ENCODE measurements at regions of chr3 and their contacts with region 1.

Region 1: DNA sequence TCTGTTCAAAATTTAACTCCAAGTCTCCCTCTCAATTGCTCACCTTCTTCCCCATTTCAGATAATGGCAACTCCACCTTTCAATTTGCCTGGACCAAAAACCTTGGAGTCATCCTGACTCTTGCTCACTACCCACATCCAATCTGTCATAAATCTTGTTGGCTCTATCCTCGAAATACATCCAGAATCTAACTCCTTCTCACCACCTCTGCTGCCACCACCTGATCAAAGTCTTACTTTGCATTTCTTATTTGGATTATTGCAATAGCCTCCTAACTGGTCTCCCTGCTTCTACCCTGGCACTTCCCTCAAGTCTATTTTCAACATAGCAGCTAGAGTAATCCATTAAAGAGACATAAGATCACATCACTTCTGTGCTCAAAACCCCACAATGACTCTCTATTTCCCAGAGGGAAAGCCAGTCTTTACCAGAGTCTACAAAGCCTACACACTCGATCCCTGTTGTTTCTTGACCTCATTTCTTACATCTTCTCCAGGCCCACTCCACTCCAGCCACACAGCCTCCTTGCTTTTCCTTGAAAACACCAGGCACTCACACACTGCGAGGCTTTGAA is 86.6 kb downstream of the GPR156 start:
- DNase-seq: peak in 1 of 10 donors; percentile 27
- H3K4me3 ChIP-seq: no peak overlapping the region
- H3K27ac ChIP-seq: peak overlapping the region in 26 of 59 donors; percentile 1 to 70 (median 20)
- H3K27me3 ChIP-seq: no peaks in the 10 kb centered on the region
- CTCF ChIP-seq: peak in 50 of 56 donors; percentile 12 to 60 (median 32)

Region 2: GRCh38 chr3:119891944-119892721 is 306.3 kb before region 1 on chr3:
- intact Hi-C with region 1: loop called in 1 of 2 experiments (anchors 2 kb)
- DNase-seq: peak in 1 of 10 donors; percentile 16
- H3K4me3 ChIP-seq: peak overlapping the region in 19 of 59 donors; percentile 6 to 47 (median 25)
- H3K27ac ChIP-seq: no peak overlapping the region
- H3K27me3 ChIP-seq: no peaks in the 10 kb centered on the region
- CTCF ChIP-seq: peak; percentile 28 to 94 (median 75)

Region 3: GRCh38 chr3:120245386-120245785 is 47.0 kb after region 1 on chr3:
- intact Hi-C with region 1: no loop called
- DNase-seq: no peak
- H3K4me3 ChIP-seq: no peak overlapping the region
- H3K27ac ChIP-seq: no peak overlapping the region
- H3K27me3 ChIP-seq: no peaks in the 10 kb centered on the region
- CTCF ChIP-seq: no peak